ENCODE measurements at regions of chr6 and their contacts with region 1.

Region 1: DNA sequence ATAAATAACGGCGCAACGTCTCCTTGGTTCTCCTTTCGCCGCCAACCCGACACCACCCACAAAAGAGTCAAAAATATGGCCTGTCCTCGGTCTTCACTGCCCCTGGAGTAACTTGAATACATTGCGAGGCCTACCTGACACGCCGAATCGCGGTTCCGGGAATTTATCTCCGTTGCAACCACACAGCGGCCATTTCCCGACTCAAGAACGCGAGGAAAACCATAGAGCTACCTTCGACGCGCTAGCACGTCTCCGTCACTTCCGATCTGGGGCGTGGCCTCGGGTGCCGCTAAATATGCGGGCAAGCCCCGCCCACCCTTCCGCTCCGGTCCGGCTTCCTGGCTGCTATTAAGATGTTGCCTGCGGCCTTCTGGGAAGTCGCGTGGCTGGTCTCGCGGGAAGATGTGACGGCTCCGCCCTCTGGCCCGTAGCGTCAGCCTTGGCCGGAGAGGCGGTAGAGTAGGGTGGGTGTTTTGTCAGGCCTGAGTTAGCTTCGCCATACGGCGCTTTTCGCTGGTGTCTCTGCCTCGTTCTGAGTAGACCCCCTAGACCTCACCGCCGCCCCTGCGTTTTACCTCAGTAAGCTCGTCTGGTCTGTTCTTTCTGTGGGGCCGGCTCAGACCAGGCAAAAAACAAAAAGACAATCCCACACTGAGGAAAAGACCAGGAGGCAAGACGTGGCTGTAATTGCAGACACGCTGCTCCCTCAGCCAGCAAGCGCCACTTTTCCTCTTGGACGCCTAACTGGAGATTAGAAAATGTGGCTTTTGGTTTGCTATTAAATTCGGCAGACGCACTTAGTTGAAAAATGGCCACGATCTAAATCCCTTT is at the start of gene BCLAF1:
- DNase-seq: peak; percentile 100
- ATAC-seq: peak; percentile 98
- H3K4me3 ChIP-seq: peak within 1 kb of the TSS; percentile 77 to 93
- H3K27ac ChIP-seq: peak within 1 kb of the TSS; percentile 100
- H3K4me1 ChIP-seq: peaks cover 0 to 5% of the 10 kb centered on the region in 2 donors
- H3K27me3 ChIP-seq: no peaks in the 10 kb centered on the region
- total RNA-seq, gene BCLAF1: 132 to 134 TPM

Region 2: GRCh38 chr6:136249811-136250685 is 39.7 kb before region 1 on chr6 and contains the start of gene MTFR2:
- intact Hi-C with region 1: loop called in 1 of 2 experiments (anchors 2 kb)
- DNase-seq: peak; percentile 94 to 97
- ATAC-seq: peak; percentile 98
- H3K4me3 ChIP-seq: peak within 1 kb of the TSS; percentile 67 to 73
- H3K27ac ChIP-seq: no peak within 1 kb of the TSS
- H3K4me1 ChIP-seq: no peaks in the 10 kb centered on the region
- H3K27me3 ChIP-seq: no peaks in the 10 kb centered on the region
- total RNA-seq, gene MTFR2: 0.39 to 0.60 TPM

Region 3: DNA sequence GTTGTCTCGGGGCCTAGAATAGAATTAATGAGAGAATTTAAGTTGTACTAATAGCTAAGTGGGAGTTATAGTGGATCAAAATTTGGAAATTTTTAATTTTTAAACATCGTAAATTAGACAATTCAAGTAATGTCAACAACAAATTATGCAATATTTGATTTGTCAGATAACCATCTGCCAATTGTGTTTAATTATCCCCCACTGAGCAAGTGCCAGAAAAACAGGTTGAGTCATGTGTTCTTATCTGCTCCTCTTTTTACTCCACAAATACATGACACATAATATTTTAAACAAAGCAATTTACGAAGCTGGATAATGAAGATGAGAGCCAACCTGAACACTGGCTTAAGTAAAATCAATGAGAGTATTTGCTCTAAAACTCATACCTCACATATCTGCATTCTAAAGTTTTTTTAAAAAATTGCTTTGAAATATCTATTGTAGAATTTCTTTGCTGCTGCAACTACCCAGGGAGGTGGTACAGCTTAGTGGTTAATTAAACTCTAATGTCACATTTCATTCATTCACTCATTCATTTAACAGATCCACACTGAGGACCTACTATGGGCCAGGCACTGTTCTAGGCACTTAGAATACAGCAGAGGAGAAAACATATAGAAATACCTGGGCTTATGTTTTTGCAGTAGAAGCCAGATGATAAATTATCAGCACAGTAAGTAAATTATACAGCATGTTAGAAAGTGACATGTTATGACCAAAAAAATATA is 317.6 kb after region 1 on chr6:
- intact Hi-C with region 1: no loop called
- DNase-seq: no peak
- ATAC-seq: no peak
- H3K4me3 ChIP-seq: no peak overlapping the region
- H3K27ac ChIP-seq: no peak overlapping the region
- H3K4me1 ChIP-seq: peaks cover 3 to 4% of the 10 kb centered on the region in 2 donors
- H3K27me3 ChIP-seq: no peaks in the 10 kb centered on the region

Measured in aorta (tissue), 5 donors.